Activated CD4-positive, alpha-beta T cell treated with anti-CD3 and anti-CD28 coated beads for 36 hours (primary cell): ENCODE measurements at regions of chr2 and their contacts with region 1.

Region 1: GRCh38 chr2:455015-455705 is 167.3 kb upstream of the ALKAL2 start:
- DNase-seq: no peak
- ATAC-seq: no peak
- H3K4me3 Mint-ChIP-seq: no peak overlapping the region
- H3K27ac Mint-ChIP-seq: no peak overlapping the region
- H3K4me1 Mint-ChIP-seq: peaks cover 32% of the 10 kb centered on the region
- H3K27me3 Mint-ChIP-seq: peaks cover 44% of the 10 kb centered on the region

Region 2: GRCh38 chr2:317501-318424 is 137.4 kb before region 1 on chr2:
- CTCF ChIA-PET with region 1: no interaction called
- POLR2A ChIA-PET with region 1: no interaction called
- intact Hi-C with region 1: loop called in 1 of 2 experiments (anchors 5 kb)
- DNase-seq: peak; percentile 63
- ATAC-seq: peak; percentile 83
- H3K4me3 Mint-ChIP-seq: peak overlapping the region; percentile 75
- H3K27ac Mint-ChIP-seq: peak overlapping the region; percentile 89
- H3K4me1 Mint-ChIP-seq: peaks cover 24% of the 10 kb centered on the region
- H3K27me3 Mint-ChIP-seq: peaks cover 13% of the 10 kb centered on the region